PC-3 (cell line): ENCODE measurements at regions of chr3 and their contacts with region 1.

Region 1: DNA sequence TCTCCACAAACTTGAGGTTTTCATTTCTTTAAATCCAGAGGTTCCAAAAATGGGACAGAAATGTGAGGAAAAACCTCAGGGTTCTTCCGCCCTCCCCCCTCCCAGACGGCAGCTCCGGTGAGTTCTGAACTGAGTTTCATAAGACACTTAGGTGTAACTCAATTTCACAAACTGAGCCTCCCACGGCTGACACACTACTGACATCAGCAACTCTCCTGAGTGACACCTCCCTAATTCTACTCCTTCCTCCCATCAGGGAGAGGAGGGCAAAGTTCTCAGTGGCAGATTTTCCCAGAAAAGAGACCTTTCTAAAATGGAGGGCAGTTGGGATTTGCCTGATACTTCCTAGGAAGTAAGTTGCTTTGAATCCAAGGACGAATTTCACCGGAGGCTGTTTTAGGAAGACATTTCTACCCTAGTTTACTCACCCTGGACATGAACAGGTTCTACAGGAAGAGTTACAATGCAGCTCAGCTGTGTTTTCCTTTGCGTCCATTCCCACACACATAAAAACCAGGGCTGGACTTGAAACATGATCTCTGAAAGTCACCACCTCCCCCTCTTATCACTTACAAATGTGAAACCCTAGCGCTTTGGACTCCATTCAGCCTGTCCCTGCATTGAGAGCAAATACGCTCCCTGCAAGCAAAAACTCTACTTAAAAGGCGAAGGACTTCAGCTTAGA is 78.1 kb upstream of the LMOD3 start:
- DNase-seq: peak; percentile 83
- ATAC-seq: peak; percentile 68
- H3K4me3 ChIP-seq: peak overlapping the region; percentile 89
- H3K27ac ChIP-seq: peak overlapping the region; percentile 97
- H3K4me1 ChIP-seq: peaks cover 27% of the 10 kb centered on the region
- H3K27me3 ChIP-seq: no peaks in the 10 kb centered on the region
- CTCF ChIP-seq: no peak

Region 2: GRCh38 chr3:69120879-69121464 is 79.6 kb before region 1 on chr3:
- CTCF ChIA-PET with region 1: no interaction called
- POLR2A ChIA-PET with region 1: interaction called, 13 read pairs
- intact Hi-C with region 1: no loop called
- DNase-seq: peak; percentile 77
- ATAC-seq: peak; percentile 79
- H3K4me3 ChIP-seq: no peak overlapping the region
- H3K27ac ChIP-seq: no peak overlapping the region
- H3K4me1 ChIP-seq: peaks cover 11% of the 10 kb centered on the region
- H3K27me3 ChIP-seq: no peaks in the 10 kb centered on the region
- CTCF ChIP-seq: peak; percentile 73

Region 3: DNA sequence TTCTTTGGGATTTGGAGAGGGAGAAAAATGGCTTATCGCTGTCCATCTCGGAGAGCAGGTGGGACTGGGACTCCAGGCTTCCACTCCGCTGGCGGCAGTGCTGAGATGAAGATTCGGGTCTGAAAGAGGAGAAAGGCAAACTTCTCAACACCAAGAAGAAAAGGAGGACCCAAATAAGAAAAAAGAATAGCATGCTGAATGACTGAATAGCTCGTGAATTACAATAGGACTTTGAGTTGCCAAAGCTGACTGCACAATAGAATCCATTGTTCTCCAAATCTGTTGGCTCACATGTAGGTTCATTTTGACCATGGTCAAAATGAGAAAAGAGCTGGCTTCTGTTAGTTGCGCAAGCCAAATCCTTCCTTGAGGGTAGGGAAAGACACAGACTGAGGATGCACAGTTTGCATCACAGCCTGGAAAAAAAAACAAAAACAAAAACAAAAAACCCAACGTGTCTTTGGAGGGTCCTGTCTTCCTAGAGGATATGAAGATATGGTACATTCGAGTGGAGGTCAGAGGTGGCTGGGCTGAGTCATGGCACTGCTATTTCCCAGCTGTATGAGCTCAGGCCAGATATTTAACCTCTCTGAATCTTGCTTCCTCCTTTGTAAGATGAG is 18.8 kb before region 1 on chr3:
- CTCF ChIA-PET with region 1: no interaction called
- POLR2A ChIA-PET with region 1: no interaction called
- intact Hi-C with region 1: loop called (anchors 1 kb)
- DNase-seq: peak; percentile 48
- ATAC-seq: peak; percentile 52
- H3K4me3 ChIP-seq: no peak overlapping the region
- H3K27ac ChIP-seq: no peak overlapping the region
- H3K4me1 ChIP-seq: peaks cover 39% of the 10 kb centered on the region
- H3K27me3 ChIP-seq: no peaks in the 10 kb centered on the region
- CTCF ChIP-seq: no peak

Region 4: GRCh38 chr3:69282181-69282580 is 81.7 kb after region 1 on chr3:
- CTCF ChIA-PET with region 1: no interaction called
- POLR2A ChIA-PET with region 1: interaction called, 3 read pairs
- intact Hi-C with region 1: loop called (anchors 5 kb)
- DNase-seq: peak; percentile 35
- ATAC-seq: peak; percentile 82
- H3K4me3 ChIP-seq: no peak overlapping the region
- H3K27ac ChIP-seq: peak overlapping the region; percentile 30
- H3K4me1 ChIP-seq: peaks cover 3% of the 10 kb centered on the region; the same call in 1 of the 2 replicates
- H3K27me3 ChIP-seq: no peaks in the 10 kb centered on the region
- CTCF ChIP-seq: no peak

Region 5: GRCh38 chr3:70020906-70021660 is 820.6 kb after region 1 on chr3:
- CTCF ChIA-PET with region 1: no interaction called
- POLR2A ChIA-PET with region 1: no interaction called
- intact Hi-C with region 1: no loop called
- DNase-seq: no peak
- ATAC-seq: no peak
- H3K4me3 ChIP-seq: no peak overlapping the region
- H3K27ac ChIP-seq: no peak overlapping the region
- H3K4me1 ChIP-seq: no peaks in the 10 kb centered on the region
- H3K27me3 ChIP-seq: no peaks in the 10 kb centered on the region
- CTCF ChIP-seq: no peak